OCI-LY7 (cell line): ENCODE measurements at regions of chr19 and their contacts with region 1.

Region 1: DNA sequence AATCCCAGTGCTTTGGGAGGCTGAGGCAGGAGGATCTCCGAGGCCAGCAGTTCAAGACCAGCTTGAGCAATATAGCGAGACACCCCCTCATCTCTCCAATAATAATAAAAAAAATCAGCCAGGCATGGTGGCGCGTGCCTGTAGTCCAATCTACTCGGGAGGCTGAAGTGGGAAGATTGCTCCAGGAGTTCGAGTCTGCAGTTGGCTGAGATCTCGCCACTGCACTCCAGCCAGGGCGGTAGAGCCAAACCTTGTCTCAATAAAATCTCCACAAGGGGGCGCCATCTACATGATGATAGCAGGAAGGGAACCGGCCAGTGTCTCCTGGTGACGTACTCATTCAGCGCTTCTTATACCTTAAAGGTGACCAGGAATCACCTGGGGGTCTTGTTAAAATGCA is 13.6 kb upstream of the C5AR1 start:
- DNase-seq: peak; percentile 93
- H3K4me3 ChIP-seq: no peak overlapping the region
- H3K27ac ChIP-seq: no peak overlapping the region
- H3K4me1 ChIP-seq: peaks cover 8% of the 10 kb centered on the region
- CTCF ChIP-seq: peak; percentile 87

Region 2: GRCh38 chr19:47391510-47392223 is 95.6 kb after region 1 on chr19:
- CTCF ChIA-PET with region 1: no interaction called
- POLR2A ChIA-PET with region 1: no interaction called
- intact Hi-C with region 1: loop called (anchors 1 kb)
- DNase-seq: peak; percentile 79
- H3K4me3 ChIP-seq: no peak overlapping the region
- H3K27ac ChIP-seq: no peak overlapping the region
- H3K4me1 ChIP-seq: peaks cover 6% of the 10 kb centered on the region
- CTCF ChIP-seq: peak; percentile 94